Activated CD4-positive, alpha-beta T cell treated with anti-CD3 and anti-CD28 coated beads for 36 hours (primary cell): ENCODE measurements at regions of chr10 and their contacts with region 1.

Region 1: GRCh38 chr10:110225756-110226542 is 18.5 kb downstream of the MXI1 start:
- DNase-seq: peak; percentile 94
- ATAC-seq: peak; percentile 48
- H3K4me3 Mint-ChIP-seq: peak overlapping the region; percentile 95
- H3K27ac Mint-ChIP-seq: peak overlapping the region; percentile 95
- H3K4me1 Mint-ChIP-seq: peaks cover 44% of the 10 kb centered on the region
- H3K27me3 Mint-ChIP-seq: no peaks in the 10 kb centered on the region

Region 2: GRCh38 chr10:110535958-110536891 is 310.3 kb after region 1 on chr10:
- CTCF ChIA-PET with region 1: no interaction called
- POLR2A ChIA-PET with region 1: no interaction called
- intact Hi-C with region 1: no loop called
- DNase-seq: peak; percentile 87
- ATAC-seq: peak; percentile 93
- H3K4me3 Mint-ChIP-seq: peak overlapping the region; percentile 15
- H3K27ac Mint-ChIP-seq: peak overlapping the region; percentile 79
- H3K4me1 Mint-ChIP-seq: peaks cover 37% of the 10 kb centered on the region
- H3K27me3 Mint-ChIP-seq: peaks cover 3% of the 10 kb centered on the region

Region 3: GRCh38 chr10:110567201-110568054 is 341.5 kb after region 1 on chr10 and contains the start of gene SMC3:
- CTCF ChIA-PET with region 1: interaction called, 5 read pairs
- POLR2A ChIA-PET with region 1: interaction called, 4 read pairs
- intact Hi-C with region 1: loop called in 1 of 2 experiments (anchors 1 kb)
- DNase-seq: peak; percentile 95
- ATAC-seq: peak; percentile 84
- H3K4me3 Mint-ChIP-seq: peak within 1 kb of the TSS; percentile 93
- H3K27ac Mint-ChIP-seq: peak within 1 kb of the TSS; percentile 99
- H3K4me1 Mint-ChIP-seq: peaks cover 35% of the 10 kb centered on the region
- H3K27me3 Mint-ChIP-seq: peaks cover 13% of the 10 kb centered on the region
- total RNA-seq, gene SMC3: 76.8 to 83.5 TPM